ENCODE measurements at regions of chr15 and their contacts with region 1.

Region 1: DNA sequence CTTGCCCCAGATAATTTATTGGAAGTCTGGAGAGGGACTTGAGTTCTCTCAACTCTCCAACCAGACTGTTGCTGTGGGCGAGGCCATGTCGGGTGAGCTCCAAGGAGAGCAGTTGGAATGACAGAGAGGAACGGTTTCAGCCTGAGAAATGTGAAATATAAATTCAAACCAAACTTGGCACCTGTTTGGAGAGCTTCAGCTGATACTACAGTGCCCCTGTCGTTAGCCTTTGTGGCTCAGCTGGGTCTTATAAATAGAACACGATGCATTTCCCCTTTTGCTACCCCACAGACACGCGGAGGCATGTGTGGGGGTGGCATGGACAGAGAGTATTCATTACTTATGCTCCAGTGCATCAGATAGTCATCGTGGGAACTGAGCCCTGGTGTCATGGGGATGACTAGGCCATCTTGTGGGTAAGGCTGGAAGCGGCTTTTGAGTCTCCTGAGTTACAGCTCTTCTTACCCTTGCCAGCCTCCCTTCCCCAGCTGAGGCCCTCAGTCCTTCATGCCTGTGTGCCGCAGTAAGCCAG is 15.6 kb downstream of the SMAD3 start:
- DNase-seq: peak; percentile 89
- H3K4me3 Mint-ChIP-seq: no peak overlapping the region
- H3K27ac Mint-ChIP-seq: peak overlapping the region; percentile 82
- H3K4me1 Mint-ChIP-seq: peaks cover 96% of the 10 kb centered on the region
- H3K27me3 Mint-ChIP-seq: no peaks in the 10 kb centered on the region

Region 2: GRCh38 chr15:66946578-66947164 is 134.3 kb before region 1 on chr15:
- CTCF ChIA-PET with region 1: interaction called, 5 read pairs
- POLR2A ChIA-PET with region 1: no interaction called
- intact Hi-C with region 1: loop called (anchors 5 kb)
- DNase-seq: peak; percentile 83
- H3K4me3 Mint-ChIP-seq: no peak overlapping the region
- H3K27ac Mint-ChIP-seq: no peak overlapping the region
- H3K4me1 Mint-ChIP-seq: peaks cover 6% of the 10 kb centered on the region
- H3K27me3 Mint-ChIP-seq: no peaks in the 10 kb centered on the region

Region 3: GRCh38 chr15:67091071-67091979 is 10.4 kb after region 1 on chr15:
- CTCF ChIA-PET with region 1: interaction called, 5 read pairs
- POLR2A ChIA-PET with region 1: interaction called, 15 read pairs
- intact Hi-C with region 1: loop called (anchors 1 kb)
- DNase-seq: peak; percentile 90
- H3K4me3 Mint-ChIP-seq: peak overlapping the region; percentile 44
- H3K27ac Mint-ChIP-seq: peak overlapping the region; percentile 78
- H3K4me1 Mint-ChIP-seq: peaks cover 91% of the 10 kb centered on the region
- H3K27me3 Mint-ChIP-seq: no peaks in the 10 kb centered on the region

Region 4: DNA sequence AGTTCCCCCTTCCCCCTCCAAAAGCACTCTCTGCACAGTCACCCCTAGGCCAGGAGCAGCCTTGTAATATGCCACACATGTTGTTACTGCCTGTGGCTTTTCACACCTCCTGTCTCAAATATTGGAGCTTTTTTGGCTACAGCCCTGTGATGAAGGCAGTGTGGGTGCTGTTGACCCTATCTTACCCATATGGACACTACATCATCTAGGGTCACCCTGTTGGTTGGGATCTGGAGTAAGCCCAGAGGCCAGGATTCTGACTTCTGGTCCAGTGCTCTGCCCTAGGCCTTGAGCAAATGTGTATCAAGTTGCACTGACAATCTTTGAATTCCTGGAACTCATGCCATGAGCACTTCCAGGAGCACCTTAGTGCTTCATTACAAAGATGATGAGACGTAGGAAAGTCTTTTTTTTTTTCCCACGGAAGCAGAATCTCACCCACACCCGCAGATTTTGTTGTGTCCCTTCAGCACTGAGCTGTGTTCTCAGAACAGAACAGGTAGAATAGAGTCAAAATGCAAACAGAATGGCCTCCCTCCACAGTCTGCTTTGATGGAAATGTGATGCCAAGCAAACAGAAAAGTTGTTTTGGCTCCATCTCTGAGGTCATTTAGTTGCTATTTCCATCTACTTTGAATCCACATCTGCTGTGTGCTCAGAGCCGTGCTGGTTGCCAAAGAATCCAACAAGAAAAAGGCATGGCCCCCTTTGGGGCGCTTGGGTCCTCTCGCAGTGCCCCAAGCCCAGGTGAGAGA is 34.1 kb after region 1 on chr15:
- CTCF ChIA-PET with region 1: no interaction called
- POLR2A ChIA-PET with region 1: interaction called, 4 read pairs
- intact Hi-C with region 1: loop called (anchors 5 kb)
- DNase-seq: peak; percentile 60
- H3K4me3 Mint-ChIP-seq: peak overlapping the region; percentile 7
- H3K27ac Mint-ChIP-seq: peak overlapping the region; percentile 95
- H3K4me1 Mint-ChIP-seq: peaks cover 90% of the 10 kb centered on the region
- H3K27me3 Mint-ChIP-seq: no peaks in the 10 kb centered on the region